HepG2 (cell line): ENCODE measurements at regions of chr19 and their contacts with region 1.

Region 1: DNA sequence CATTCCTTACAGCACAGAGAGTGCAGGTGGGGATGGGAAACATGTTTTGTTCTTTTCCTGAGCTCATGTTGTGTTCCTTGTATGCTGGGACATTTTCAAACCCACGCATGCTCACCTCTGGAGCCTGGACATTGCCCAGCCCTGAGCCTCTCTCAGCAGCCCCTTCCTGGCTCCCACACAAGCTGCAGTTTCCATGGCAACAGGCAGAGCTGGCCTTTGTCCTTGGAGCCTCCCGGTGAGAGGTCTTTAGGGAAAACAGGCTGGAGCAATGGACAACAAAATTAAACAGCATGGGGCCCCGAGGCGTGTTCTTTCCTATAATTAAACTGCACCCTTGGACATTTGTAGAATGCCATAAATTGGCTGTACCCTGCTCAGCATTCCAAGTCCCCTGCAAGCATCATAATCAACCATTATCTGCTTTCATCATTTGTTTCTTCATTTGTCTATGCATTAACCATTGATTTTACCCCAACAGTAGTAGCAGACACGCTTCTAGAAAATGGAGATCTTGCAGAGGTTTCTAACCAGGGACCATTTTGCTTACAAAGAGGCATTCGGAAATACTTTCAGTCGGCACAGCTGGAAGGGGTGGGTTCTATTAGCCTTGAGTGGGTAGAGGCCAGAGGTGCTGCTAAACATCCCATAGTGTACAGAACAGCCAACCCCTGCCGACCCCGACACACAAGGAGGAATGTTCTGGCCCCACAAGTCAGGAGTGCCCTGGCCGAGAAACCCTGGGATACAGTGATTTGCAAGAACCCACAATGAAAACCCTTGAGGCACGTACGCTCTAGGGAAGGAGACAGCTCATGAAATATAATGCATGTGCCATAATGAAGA is 133.4 kb upstream of the PEG3 start:
- DNase-seq: peak; percentile 94
- ATAC-seq: peak; percentile 75
- H3K4me3 ChIP-seq: peak overlapping the region in 1 of 3 experiments; percentile 25; a peak in 1 of 6 replicates
- H3K27ac ChIP-seq: peak overlapping the region; percentile 94
- H3K4me1 ChIP-seq: peaks cover 97% of the 10 kb centered on the region
- H3K27me3 ChIP-seq: no peaks in the 10 kb centered on the region
- CTCF ChIP-seq: no peak
- EP300 ChIP-seq: no peak; a peak in 1 of 4 replicates
- POLR2A ChIP-seq: 0 out of 4 replicates have a peak, but pooled peaks of 1 of the 2 experiments have one; percentile 35
- RAD21 ChIP-seq: no peak

Region 2: GRCh38 chr19:56885173-56885987 is 88.6 kb before region 1 on chr19:
- CTCF ChIA-PET with region 1: no interaction called
- POLR2A ChIA-PET with region 1: interaction called, 12 read pairs
- in situ Hi-C with region 1: no loop called
- intact Hi-C with region 1: no loop called
- DNase-seq: peak; percentile 69
- ATAC-seq: peak; percentile 60
- H3K4me3 ChIP-seq: peak overlapping the region in 1 of 3 experiments; percentile 30; a peak in 2 of 6 replicates
- H3K27ac ChIP-seq: peak overlapping the region; percentile 84
- H3K4me1 ChIP-seq: peaks cover 72% of the 10 kb centered on the region
- H3K27me3 ChIP-seq: no peaks in the 10 kb centered on the region
- CTCF ChIP-seq: no peak
- EP300 ChIP-seq: peak; percentile 59 to 83; a peak in 1 of 4 replicates
- POLR2A ChIP-seq: no peak
- RAD21 ChIP-seq: no peak; the same call in 1 of the 2 replicates

Region 3: GRCh38 chr19:56917998-56918397 is 55.9 kb before region 1 on chr19:
- CTCF ChIA-PET with region 1: no interaction called
- POLR2A ChIA-PET with region 1: interaction called, 11 read pairs
- in situ Hi-C with region 1: no loop called
- intact Hi-C with region 1: loop called (anchors 10 kb)
- DNase-seq: peak; percentile 75
- ATAC-seq: peak; percentile 82
- H3K4me3 ChIP-seq: peak overlapping the region in 1 of 3 experiments; percentile 24; a peak in 1 of 6 replicates
- H3K27ac ChIP-seq: peak overlapping the region; percentile 70
- H3K4me1 ChIP-seq: peaks cover 57% of the 10 kb centered on the region
- H3K27me3 ChIP-seq: no peaks in the 10 kb centered on the region
- CTCF ChIP-seq: peak; percentile 42
- EP300 ChIP-seq: peak in 1 of 2 experiments; percentile 53; a peak in 1 of 4 replicates
- POLR2A ChIP-seq: no peak
- RAD21 ChIP-seq: no peak

Region 4: DNA sequence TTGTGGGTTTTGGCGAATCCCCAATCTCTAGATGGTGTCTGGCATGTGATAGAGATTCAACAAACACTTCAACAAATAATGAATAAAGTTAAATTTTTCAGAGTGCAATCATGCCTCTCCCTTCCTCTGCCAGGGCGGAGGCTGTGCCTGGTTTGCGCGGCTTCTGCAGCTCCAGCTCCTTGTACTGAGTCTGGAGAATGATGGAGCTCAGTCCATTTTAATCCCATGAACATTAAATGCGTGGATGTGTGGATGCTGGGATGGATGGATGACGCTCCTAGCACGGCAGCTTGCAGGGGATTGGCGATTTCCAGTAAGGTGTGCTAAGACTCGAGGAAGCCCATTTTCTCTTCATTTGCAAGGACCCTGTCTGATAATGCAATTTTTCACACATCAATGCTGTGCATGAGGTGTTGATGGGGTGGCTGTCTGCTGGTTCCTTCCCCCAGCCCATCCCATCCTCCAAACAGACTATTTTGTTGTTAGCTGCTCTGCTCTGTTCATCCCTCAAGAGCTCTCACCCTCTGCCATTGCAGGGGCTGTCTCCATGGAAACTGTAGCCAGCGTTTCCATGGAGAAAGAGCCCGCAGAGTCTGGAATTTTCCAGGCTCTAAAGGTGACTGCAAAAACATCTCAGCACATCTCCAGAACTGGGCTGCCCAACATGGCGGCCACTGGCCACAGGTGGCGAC is 40.8 kb before region 1 on chr19:
- CTCF ChIA-PET with region 1: no interaction called
- POLR2A ChIA-PET with region 1: interaction called, 25 read pairs
- in situ Hi-C with region 1: no loop called
- intact Hi-C with region 1: loop called (anchors 5 kb)
- DNase-seq: no peak
- ATAC-seq: no peak
- H3K4me3 ChIP-seq: no peak overlapping the region
- H3K27ac ChIP-seq: no peak overlapping the region
- H3K4me1 ChIP-seq: peaks cover 92% of the 10 kb centered on the region
- H3K27me3 ChIP-seq: no peaks in the 10 kb centered on the region
- CTCF ChIP-seq: no peak
- EP300 ChIP-seq: no peak
- POLR2A ChIP-seq: no peak
- RAD21 ChIP-seq: no peak